ENCODE measurements at regions of chr3 and their contacts with region 1.

Region 1: DNA sequence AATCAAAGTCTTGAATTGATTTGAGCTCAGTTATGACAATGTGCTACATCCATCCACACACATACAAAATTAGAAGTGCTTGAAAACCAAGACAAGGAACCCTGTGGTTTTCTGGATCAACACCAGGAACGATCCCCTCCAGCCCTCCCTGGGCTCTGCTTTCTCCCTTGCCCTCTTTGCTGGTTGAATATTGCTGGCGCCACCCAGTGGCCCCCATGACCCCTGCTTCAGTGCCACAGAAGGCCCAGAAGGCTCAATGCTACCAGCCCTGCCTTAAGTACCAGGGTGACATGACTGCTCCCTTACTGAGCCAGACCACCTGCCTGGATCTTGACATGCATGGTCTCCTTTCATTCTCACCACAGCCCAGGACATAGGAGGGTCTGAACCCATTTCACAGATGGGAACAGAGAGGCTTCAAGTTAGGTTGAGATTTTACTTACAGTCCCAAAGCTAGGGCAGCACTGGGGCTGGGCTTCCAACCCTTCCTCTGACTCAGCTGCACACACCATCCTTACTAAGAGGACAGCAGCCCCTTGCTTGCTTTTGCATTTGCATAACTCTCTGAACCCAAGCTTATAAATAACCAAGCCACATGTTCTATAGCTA is 15.0 kb downstream of the IL12A start:
- DNase-seq: peak; percentile 66
- H3K4me3 Mint-ChIP-seq: no peak overlapping the region
- H3K27ac Mint-ChIP-seq: no peak overlapping the region
- H3K4me1 Mint-ChIP-seq: peaks cover 6% of the 10 kb centered on the region
- H3K27me3 Mint-ChIP-seq: no peaks in the 10 kb centered on the region
- CTCF ChIP-seq: peak; percentile 69

Region 2: DNA sequence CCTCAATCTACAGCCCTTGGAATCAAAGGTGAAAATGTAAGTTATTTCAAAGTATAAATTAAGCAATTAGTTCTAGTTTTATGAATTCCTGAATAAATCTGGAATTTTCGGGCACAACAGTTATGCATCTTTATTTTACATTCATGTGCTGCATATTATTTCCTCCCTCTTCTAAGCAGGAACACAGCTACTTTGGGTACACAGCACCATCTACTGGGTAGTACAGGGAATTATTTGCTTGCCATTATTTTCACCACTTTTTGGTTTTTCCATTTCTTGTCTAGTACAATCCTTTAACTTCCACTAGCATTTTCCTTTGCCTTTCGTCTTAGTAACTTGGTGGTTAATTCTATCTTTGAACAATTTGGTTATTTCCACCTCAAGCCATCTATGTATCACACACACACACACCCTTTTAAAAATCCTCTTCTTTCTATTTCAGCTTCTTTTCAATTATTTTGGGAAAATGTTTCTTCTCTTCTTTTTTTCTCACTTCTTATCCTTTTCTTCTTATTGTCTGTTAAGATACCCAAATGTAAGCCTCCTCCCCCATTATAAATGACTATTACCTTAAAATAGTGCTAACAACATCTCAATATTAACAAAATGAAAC is 750.7 kb before region 1 on chr3:
- CTCF ChIA-PET with region 1: no interaction called
- POLR2A ChIA-PET with region 1: no interaction called
- intact Hi-C with region 1: no loop called
- DNase-seq: peak; percentile 54
- H3K4me3 Mint-ChIP-seq: no peak overlapping the region
- H3K27ac Mint-ChIP-seq: no peak overlapping the region
- H3K4me1 Mint-ChIP-seq: no peaks in the 10 kb centered on the region
- H3K27me3 Mint-ChIP-seq: peaks cover 61% of the 10 kb centered on the region
- CTCF ChIP-seq: peak; percentile 76

Region 3: DNA sequence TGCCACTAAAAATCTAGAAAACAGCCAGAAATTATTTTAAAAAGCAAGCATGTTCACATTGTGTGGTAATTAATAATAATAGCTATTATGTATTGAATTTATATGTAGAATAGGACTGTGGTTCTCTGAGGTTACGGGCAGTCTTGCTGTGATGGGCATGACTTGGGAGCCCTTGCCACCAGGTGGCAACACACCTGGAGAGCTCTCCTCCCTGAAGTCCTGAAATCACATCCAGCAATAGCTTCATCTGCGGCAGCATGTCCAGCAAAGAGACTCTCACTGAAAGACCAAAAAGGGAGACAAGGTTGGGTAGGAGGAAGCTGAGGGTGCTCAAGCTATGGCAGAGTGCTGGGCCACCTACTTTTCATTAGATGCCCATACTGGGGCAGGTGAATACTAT is 221.8 kb before region 1 on chr3:
- CTCF ChIA-PET with region 1: interaction called, 18 read pairs
- POLR2A ChIA-PET with region 1: no interaction called
- intact Hi-C with region 1: no loop called
- DNase-seq: no peak
- H3K4me3 Mint-ChIP-seq: no peak overlapping the region
- H3K27ac Mint-ChIP-seq: no peak overlapping the region
- H3K4me1 Mint-ChIP-seq: peaks cover 36% of the 10 kb centered on the region
- H3K27me3 Mint-ChIP-seq: no peaks in the 10 kb centered on the region
- CTCF ChIP-seq: no peak

Region 4: GRCh38 chr3:159828542-159828943 is 175.1 kb before region 1 on chr3:
- CTCF ChIA-PET with region 1: interaction called, 179 read pairs
- POLR2A ChIA-PET with region 1: interaction called, 17 read pairs
- intact Hi-C with region 1: loop called (anchors 1 kb)
- DNase-seq: peak; percentile 71
- H3K4me3 Mint-ChIP-seq: no peak overlapping the region
- H3K27ac Mint-ChIP-seq: peak overlapping the region; percentile 84
- H3K4me1 Mint-ChIP-seq: peaks cover 40% of the 10 kb centered on the region
- H3K27me3 Mint-ChIP-seq: no peaks in the 10 kb centered on the region
- CTCF ChIP-seq: peak; percentile 38

Region 5: GRCh38 chr3:159872374-159873109 is 131.1 kb before region 1 on chr3:
- CTCF ChIA-PET with region 1: interaction called, 23 read pairs
- POLR2A ChIA-PET with region 1: interaction called, 4 read pairs
- intact Hi-C with region 1: no loop called
- DNase-seq: peak; percentile 89
- H3K4me3 Mint-ChIP-seq: no peak overlapping the region
- H3K27ac Mint-ChIP-seq: peak overlapping the region; percentile 84
- H3K4me1 Mint-ChIP-seq: peaks cover 22% of the 10 kb centered on the region
- H3K27me3 Mint-ChIP-seq: no peaks in the 10 kb centered on the region
- CTCF ChIP-seq: peak; percentile 12

Region 6: DNA sequence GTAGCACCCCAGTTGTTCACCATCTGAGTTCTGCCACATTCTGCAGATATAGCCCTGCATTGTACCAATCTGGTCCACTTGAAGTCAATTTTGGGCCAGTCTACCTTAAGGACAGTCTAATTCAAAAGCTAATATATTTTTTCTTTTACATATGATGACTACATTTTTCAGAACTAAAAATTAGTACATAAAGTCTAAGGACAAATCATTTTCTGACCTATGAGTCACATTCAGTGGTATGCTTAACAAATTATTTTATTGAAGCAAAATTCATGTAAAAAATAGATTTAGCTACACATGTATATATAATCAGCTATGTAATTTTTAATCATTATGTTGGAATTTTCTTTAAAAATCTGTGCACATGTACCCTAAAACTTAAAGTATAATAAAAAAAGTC is 67.1 kb before region 1 on chr3:
- CTCF ChIA-PET with region 1: interaction called, 87 read pairs
- POLR2A ChIA-PET with region 1: no interaction called
- intact Hi-C with region 1: no loop called
- DNase-seq: no peak
- H3K4me3 Mint-ChIP-seq: no peak overlapping the region
- H3K27ac Mint-ChIP-seq: no peak overlapping the region
- H3K4me1 Mint-ChIP-seq: peaks cover 16% of the 10 kb centered on the region
- H3K27me3 Mint-ChIP-seq: no peaks in the 10 kb centered on the region
- CTCF ChIP-seq: no peak

Region 7: GRCh38 chr3:160052385-160053047 is 48.9 kb after region 1 on chr3:
- CTCF ChIA-PET with region 1: no interaction called
- POLR2A ChIA-PET with region 1: no interaction called
- intact Hi-C with region 1: no loop called
- DNase-seq: no peak
- H3K4me3 Mint-ChIP-seq: peak overlapping the region; percentile 29
- H3K27ac Mint-ChIP-seq: peak overlapping the region; percentile 6
- H3K4me1 Mint-ChIP-seq: peaks cover 12% of the 10 kb centered on the region
- H3K27me3 Mint-ChIP-seq: no peaks in the 10 kb centered on the region
- CTCF ChIP-seq: no peak

Region 8: DNA sequence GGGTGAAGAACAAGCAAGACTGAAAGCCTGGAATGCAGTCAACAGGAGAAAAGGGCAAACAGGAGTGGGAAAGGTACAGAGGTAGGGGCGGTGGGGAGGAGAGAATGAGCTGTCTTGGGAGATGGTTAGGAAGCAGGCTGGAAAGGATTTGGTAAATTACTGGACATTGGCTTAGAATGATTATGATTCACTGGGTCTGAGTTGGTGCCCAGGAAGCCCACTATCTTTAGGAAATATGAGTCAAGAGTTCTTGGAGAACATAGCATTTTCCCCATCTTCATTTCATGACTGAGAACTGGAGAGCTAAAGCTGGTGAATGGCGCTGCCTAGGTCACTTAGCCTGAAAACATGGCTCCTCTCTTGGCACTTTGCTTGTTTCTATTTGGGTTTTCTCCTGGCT is 146.9 kb after region 1 on chr3:
- CTCF ChIA-PET with region 1: no interaction called
- POLR2A ChIA-PET with region 1: no interaction called
- intact Hi-C with region 1: no loop called
- DNase-seq: peak; percentile 18
- H3K4me3 Mint-ChIP-seq: no peak overlapping the region
- H3K27ac Mint-ChIP-seq: no peak overlapping the region
- H3K4me1 Mint-ChIP-seq: peaks cover 6% of the 10 kb centered on the region
- H3K27me3 Mint-ChIP-seq: no peaks in the 10 kb centered on the region
- CTCF ChIP-seq: no peak

Region 9: DNA sequence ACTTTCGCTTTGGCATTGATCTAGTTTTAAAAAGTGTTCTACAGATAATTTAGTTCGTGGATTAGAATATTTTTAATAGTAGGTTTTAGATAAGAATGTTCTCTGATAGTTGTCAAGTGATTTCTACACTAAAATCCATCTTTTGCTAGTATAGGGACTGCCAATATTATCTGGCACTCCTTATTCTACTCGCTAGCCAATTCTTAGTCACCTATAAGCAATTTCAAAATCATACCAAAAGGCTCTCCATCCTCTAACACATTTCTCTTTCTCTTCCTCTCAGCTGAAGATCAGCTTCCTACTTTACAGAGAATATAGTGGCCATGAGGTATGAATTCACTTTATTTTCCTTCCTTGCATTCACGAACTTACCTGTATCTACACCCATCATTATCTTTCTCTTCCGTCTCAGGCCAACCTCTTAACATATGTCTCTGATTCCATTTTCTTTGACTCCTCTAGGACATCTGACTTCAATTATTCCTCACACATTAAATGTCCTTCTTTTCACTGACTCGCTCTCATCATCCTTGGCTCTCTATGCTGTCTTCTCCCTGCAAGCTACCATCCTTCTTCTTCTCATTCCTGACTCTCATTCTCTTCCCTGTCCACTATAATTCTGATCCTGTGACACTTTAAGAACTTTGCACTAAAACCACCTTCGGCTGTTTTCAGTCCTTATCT is 257.1 kb after region 1 on chr3:
- CTCF ChIA-PET with region 1: no interaction called
- POLR2A ChIA-PET with region 1: no interaction called
- intact Hi-C with region 1: no loop called
- DNase-seq: no peak
- H3K4me3 Mint-ChIP-seq: no peak overlapping the region
- H3K27ac Mint-ChIP-seq: no peak overlapping the region
- H3K4me1 Mint-ChIP-seq: peaks cover 7% of the 10 kb centered on the region
- H3K27me3 Mint-ChIP-seq: no peaks in the 10 kb centered on the region
- CTCF ChIP-seq: no peak